Activated T-helper 2 cell treated with anti-CD3 and anti-CD28 coated beads, Interferon-gamma antibody, Interleukin-2, Interleukin-4, amounts not matched to agents 10 μg/mL and 5 μg/mL and 100 μg/mL, durations not matched to agents 14 hours and 24 hours and 36 hours (primary cell): ENCODE measurements at regions of chr3 and their contacts with region 1.

Region 1: DNA sequence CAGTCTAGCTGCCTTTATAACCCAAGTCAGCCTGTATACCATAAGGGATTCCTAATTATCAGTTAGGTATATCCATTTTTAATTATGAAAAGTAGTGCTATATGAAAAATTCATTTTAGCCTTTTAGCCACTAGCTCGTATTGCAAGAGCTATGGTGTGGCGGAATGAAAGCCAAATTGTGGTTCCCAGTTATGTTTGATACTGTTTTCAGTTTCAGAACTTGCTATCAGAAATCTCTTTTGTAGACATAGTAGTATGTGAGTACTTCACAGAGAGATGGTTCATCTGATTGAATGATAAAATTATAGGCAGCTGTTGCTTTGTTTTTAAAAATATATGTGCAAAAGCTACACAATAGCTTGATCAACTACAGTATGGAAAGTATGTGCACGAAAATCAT is 134.6 kb downstream of the SLC25A26 start:
- DNase-seq: no peak
- H3K4me3 Mint-ChIP-seq: no peak overlapping the region
- H3K27ac Mint-ChIP-seq: no peak overlapping the region
- H3K4me1 Mint-ChIP-seq: peaks cover 32% of the 10 kb centered on the region
- H3K27me3 Mint-ChIP-seq: peaks cover 5% of the 10 kb centered on the region

Region 2: GRCh38 chr3:65627102-65627501 is 728.3 kb before region 1 on chr3:
- intact Hi-C with region 1: no loop called
- DNase-seq: no peak
- H3K4me3 Mint-ChIP-seq: no peak overlapping the region
- H3K27ac Mint-ChIP-seq: no peak overlapping the region
- H3K4me1 Mint-ChIP-seq: no peaks in the 10 kb centered on the region
- H3K27me3 Mint-ChIP-seq: no peaks in the 10 kb centered on the region

Region 3: DNA sequence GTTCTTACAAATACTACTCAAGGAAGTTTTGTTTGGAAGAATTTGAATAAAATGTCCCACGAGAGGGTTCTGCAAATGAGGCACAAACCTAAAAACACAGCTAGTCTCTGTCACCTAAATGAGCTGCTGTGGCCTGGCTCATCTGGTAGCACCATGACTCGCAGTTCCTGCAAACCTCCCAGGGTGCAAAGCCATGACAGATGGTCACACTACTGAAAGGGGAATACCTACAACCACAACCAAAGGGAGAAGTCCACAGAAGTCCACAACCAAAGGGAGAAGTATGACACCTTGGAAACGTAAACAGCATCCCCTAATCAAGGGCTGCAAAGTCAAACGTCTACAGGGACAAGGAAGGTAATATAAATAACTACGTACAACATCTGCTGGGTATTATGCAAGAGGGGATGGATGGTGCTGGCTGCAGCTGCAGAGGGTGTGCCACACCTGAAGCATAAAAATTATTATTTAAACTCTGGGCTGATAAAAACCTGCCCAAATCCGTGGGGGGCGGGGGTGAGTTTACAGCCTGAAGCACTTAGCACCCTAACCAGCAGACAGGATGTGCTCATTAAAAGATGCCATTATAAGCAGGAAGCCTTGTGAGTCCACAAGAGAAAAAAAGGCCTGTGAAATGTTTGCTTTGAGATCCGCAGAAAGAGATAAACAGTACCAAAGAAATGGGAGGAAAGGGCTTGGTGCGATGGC is 500.6 kb before region 1 on chr3:
- intact Hi-C with region 1: no loop called
- DNase-seq: no peak
- H3K4me3 Mint-ChIP-seq: no peak overlapping the region
- H3K27ac Mint-ChIP-seq: no peak overlapping the region
- H3K4me1 Mint-ChIP-seq: no peaks in the 10 kb centered on the region
- H3K27me3 Mint-ChIP-seq: no peaks in the 10 kb centered on the region

Region 4: DNA sequence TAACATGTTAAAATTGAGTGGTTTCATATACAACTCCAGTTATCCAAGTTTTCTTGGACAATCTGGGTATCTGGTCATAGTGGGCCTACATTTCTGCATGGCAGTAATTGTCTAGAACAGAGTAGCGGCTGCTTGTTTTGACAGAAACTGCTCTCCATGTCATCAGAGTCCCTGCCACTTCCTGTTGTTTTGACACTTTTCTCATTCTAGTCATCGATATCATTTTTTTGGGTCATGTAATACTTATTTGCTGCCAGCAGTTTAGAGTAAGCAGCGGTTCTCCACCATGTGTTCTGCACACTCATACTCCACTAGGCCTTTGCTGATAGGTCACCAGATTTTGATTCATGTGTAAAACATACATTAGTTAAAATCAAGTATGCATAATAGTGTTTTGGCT is 53.1 kb before region 1 on chr3:
- intact Hi-C with region 1: loop called (anchors 1 kb)
- DNase-seq: no peak
- H3K4me3 Mint-ChIP-seq: peak overlapping the region; percentile 37
- H3K27ac Mint-ChIP-seq: peak overlapping the region; percentile 94
- H3K4me1 Mint-ChIP-seq: peaks cover 55% of the 10 kb centered on the region
- H3K27me3 Mint-ChIP-seq: no peaks in the 10 kb centered on the region

Region 5: GRCh38 chr3:66386925-66387650 is 31.7 kb after region 1 on chr3:
- intact Hi-C with region 1: no loop called
- DNase-seq: no peak
- H3K4me3 Mint-ChIP-seq: no peak overlapping the region
- H3K27ac Mint-ChIP-seq: peak overlapping the region; percentile 42
- H3K4me1 Mint-ChIP-seq: peaks cover 5% of the 10 kb centered on the region
- H3K27me3 Mint-ChIP-seq: no peaks in the 10 kb centered on the region

Region 6: GRCh38 chr3:66442254-66443117 is 87.1 kb after region 1 on chr3:
- intact Hi-C with region 1: no loop called
- DNase-seq: no peak
- H3K4me3 Mint-ChIP-seq: no peak overlapping the region
- H3K27ac Mint-ChIP-seq: no peak overlapping the region
- H3K4me1 Mint-ChIP-seq: peaks cover 23% of the 10 kb centered on the region
- H3K27me3 Mint-ChIP-seq: no peaks in the 10 kb centered on the region